ENCODE measurements at regions of chr3 and their contacts with region 1.

Region 1: GRCh38 chr3:157088601-157089454 is 71.1 kb downstream of the CCNL1 start:
- DNase-seq: peak; percentile 100
- H3K4me3 Mint-ChIP-seq: peak overlapping the region; percentile 83
- H3K27ac Mint-ChIP-seq: peak overlapping the region; percentile 94
- H3K4me1 Mint-ChIP-seq: peaks cover 76% of the 10 kb centered on the region
- H3K27me3 Mint-ChIP-seq: no peaks in the 10 kb centered on the region
- CTCF ChIP-seq: peak; percentile 49

Region 2: DNA sequence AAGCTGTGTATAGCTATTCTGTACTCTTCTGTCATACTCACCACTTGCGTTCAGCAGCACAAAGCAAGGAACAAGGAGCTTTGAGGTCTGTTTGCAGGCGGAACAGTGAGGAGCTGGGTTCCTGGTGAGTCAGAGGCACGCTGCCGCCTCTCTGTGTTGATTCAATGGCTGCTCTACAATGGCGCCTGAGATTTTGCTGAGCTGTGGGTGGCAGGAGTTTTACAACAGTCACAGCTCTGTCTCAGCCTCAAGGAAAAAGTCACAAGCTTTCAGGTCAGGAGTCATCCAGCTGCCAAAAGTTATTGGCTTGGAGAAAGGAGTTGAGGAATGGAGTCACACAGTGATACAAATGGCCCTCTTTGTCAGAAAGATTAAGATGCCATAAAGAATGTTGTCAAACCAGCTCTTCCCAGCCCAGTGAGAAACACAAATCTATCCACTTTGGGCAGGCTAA is 632.0 kb before region 1 on chr3:
- CTCF ChIA-PET with region 1: interaction called, 3 read pairs
- intact Hi-C with region 1: loop called (anchors 5 kb)
- DNase-seq: peak; percentile 80
- H3K4me3 Mint-ChIP-seq: peak overlapping the region; percentile 57
- H3K27ac Mint-ChIP-seq: peak overlapping the region; percentile 89
- H3K4me1 Mint-ChIP-seq: peaks cover 27% of the 10 kb centered on the region
- H3K27me3 Mint-ChIP-seq: no peaks in the 10 kb centered on the region
- CTCF ChIP-seq: no peak

Region 3: DNA sequence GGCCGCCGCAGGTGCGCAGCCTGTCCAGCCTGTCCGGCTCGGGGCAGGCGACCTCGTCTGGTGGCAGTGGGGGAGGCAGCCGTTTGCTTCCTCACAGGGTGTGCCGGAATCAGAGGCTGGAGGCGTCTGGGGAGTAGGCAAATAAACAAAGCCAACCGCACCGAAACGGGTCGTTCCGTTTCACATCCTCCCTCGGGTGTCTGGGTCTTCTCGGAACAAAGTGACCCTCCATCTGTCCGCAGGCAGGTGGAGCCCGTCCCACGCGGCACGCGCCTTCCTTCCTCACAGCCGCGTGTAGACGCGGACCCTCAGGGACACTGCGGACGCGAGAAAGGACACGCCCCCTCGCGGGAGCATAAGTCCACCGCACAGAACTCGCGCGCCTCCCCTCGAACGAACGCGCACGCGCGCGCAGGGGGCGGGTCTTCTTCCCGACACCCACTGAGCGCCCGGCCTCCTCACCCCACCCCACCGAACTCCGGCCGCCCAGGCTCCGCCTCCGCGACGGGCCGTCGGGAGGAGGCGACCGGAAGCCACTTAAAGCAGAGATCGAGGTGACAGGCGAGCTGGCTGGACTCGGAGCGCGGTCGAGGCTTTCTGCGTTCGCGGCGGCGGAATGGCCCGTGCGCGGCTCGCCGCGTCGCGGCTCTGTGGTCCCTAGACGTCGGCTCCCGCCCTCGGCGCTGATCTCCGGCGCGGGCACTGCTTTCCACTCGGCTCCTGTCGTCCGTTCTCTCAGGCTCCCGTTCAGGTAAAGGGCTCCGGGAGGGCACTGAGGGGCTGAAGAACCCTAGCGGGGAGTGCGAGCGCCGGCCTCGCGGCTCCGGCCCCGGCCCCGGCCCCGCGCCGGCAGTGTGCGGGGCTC is 414.6 kb before region 1 on chr3 and contains the start of gene TIPARP:
- CTCF ChIA-PET with region 1: interaction called, 13 read pairs
- intact Hi-C with region 1: no loop called
- DNase-seq: peak; percentile 100
- H3K4me3 Mint-ChIP-seq: peak within 1 kb of the TSS; percentile 99
- H3K27ac Mint-ChIP-seq: peak within 1 kb of the TSS; percentile 99
- H3K4me1 Mint-ChIP-seq: peaks cover 46% of the 10 kb centered on the region
- H3K27me3 Mint-ChIP-seq: no peaks in the 10 kb centered on the region
- CTCF ChIP-seq: peak; percentile 89
- total RNA-seq, gene TIPARP: 84.9 and 91.4 TPM in 2 replicates

Region 4: GRCh38 chr3:157099326-157100095 is 10.7 kb after region 1 on chr3:
- CTCF ChIA-PET with region 1: interaction called, 16 read pairs
- intact Hi-C with region 1: no loop called
- DNase-seq: no peak
- H3K4me3 Mint-ChIP-seq: no peak overlapping the region
- H3K27ac Mint-ChIP-seq: no peak overlapping the region
- H3K4me1 Mint-ChIP-seq: peaks cover 19% of the 10 kb centered on the region
- H3K27me3 Mint-ChIP-seq: no peaks in the 10 kb centered on the region
- CTCF ChIP-seq: no peak

Region 5: DNA sequence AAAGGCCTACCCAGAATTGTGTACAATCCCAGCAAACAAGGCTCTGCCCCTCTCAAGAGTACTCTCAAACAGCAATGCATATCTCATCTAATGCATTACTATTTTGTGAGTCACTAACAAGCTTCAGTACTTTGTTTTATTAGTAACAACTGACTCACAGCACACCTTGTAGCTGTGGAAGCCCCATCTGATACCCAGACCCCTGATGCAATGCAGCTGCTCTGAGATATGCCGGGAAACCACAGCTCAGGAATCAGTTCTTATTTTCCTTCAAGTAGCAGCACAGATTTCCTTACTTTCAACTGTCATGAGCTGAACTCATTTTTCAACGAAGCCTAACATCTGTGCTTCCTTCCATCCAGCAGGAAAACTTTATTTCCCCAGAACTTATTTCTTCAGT is 33.3 kb after region 1 on chr3:
- CTCF ChIA-PET with region 1: interaction called, 22 read pairs
- intact Hi-C with region 1: no loop called
- DNase-seq: peak; percentile 74
- H3K4me3 Mint-ChIP-seq: peak overlapping the region; percentile 66
- H3K27ac Mint-ChIP-seq: peak overlapping the region; percentile 95
- H3K4me1 Mint-ChIP-seq: peaks cover 82% of the 10 kb centered on the region
- H3K27me3 Mint-ChIP-seq: no peaks in the 10 kb centered on the region
- CTCF ChIP-seq: no peak

Region 6: DNA sequence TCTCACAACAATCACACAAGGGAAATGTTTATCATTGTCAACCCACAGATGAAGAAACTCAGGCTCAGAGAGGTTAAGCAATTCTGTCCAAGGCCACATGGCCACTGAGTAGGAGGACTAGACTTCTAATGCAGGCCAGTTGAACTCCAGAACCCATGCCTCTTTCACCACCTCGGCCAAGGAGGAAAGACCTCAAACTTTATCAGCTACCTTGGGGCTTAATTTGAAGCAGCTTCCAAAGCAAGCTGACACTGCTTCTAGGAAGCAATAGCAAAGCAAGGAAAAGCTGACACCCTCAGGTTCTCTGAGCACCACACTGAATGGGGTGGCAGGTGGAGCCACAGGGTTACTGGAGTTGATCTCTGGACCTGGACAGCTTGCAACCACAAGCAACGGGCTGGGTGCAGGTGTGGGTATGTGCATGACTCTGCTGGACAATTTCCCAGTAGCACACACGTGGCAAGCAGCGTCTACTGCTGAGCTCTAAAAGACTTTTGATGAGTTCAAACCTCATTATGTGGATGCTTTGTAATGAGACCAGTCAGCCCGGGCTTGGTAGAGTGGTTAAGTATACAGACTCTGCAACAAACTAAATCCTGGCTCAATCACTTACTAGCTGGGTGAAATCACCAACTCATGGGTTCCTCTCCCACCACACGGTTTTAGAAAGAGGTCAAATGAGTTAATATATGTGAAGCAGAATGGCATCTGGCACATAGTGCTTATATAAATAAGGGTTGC is 48.0 kb after region 1 on chr3:
- CTCF ChIA-PET with region 1: interaction called, 49 read pairs
- intact Hi-C with region 1: no loop called
- DNase-seq: peak; percentile 48
- H3K4me3 Mint-ChIP-seq: peak overlapping the region; percentile 49
- H3K27ac Mint-ChIP-seq: peak overlapping the region; percentile 56
- H3K4me1 Mint-ChIP-seq: peaks cover 52% of the 10 kb centered on the region
- H3K27me3 Mint-ChIP-seq: no peaks in the 10 kb centered on the region
- CTCF ChIP-seq: no peak